PC-9 (cell line): ENCODE measurements at regions of chr19 and their contacts with region 1.

Region 1: DNA sequence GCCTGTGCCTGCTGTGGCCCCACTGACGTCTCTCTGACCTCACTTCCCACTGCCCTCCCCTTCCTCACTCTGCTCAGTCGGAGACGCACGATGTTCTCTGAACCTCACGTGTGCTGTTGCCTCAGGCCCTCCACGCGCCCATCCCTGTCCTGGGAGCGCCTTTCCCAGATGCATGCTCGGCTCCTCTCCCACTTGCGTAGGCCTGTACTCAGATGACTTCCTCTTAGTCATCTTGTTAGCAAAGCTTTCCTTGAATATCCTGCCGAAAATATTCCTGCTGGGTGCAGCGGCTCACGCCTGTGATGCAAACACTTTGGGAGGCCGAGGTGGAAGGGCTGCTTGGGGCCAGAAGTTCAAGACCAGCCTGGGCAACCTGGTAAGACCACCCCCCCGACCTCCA is 9.3 kb upstream of the SYT5 start:
- DNase-seq: peak; percentile 90 to 91
- H3K4me3 ChIP-seq: no peak overlapping the region
- H3K27ac ChIP-seq: peak overlapping the region; percentile 75
- H3K4me1 ChIP-seq: peaks cover 15% of the 10 kb centered on the region; the same call in 1 of the 2 replicates
- H3K27me3 ChIP-seq: no peaks in the 10 kb centered on the region
- CTCF ChIP-seq: no peak

Region 2: GRCh38 chr19:55206664-55207500 is 17.5 kb after region 1 on chr19:
- CTCF ChIA-PET with region 1: no interaction called
- POLR2A ChIA-PET with region 1: interaction called, 6 read pairs
- intact Hi-C with region 1: loop called (anchors 1 kb)
- DNase-seq: peak; percentile 89 to 95
- H3K4me3 ChIP-seq: peak overlapping the region; percentile 24; the same call in 1 of the 2 replicates
- H3K27ac ChIP-seq: peak overlapping the region; percentile 80
- H3K4me1 ChIP-seq: peaks cover 40% of the 10 kb centered on the region
- H3K27me3 ChIP-seq: no peaks in the 10 kb centered on the region
- CTCF ChIP-seq: no peak

Region 3: GRCh38 chr19:55216461-55217198 is 27.2 kb after region 1 on chr19:
- CTCF ChIA-PET with region 1: no interaction called
- POLR2A ChIA-PET with region 1: no interaction called
- intact Hi-C with region 1: loop called (anchors 2 kb)
- DNase-seq: peak; percentile 95 to 100
- H3K4me3 ChIP-seq: peak overlapping the region; percentile 61
- H3K27ac ChIP-seq: peak overlapping the region; percentile 92
- H3K4me1 ChIP-seq: peaks cover 15% of the 10 kb centered on the region
- H3K27me3 ChIP-seq: no peaks in the 10 kb centered on the region
- CTCF ChIP-seq: no peak